Adrenal gland (tissue), 19 donors: ENCODE measurements at regions of chr19 and their contacts with region 1.

Region 1: GRCh38 chr19:49937750-49938381 is 8.6 kb upstream of the NUP62 start:
- DNase-seq: peak; percentile 82 to 89 (median 84)
- H3K4me3 ChIP-seq: peak overlapping the region in 1 of 4 donors; percentile 18
- H3K27ac ChIP-seq: peak overlapping the region; percentile 28 to 84 (median 67)
- H3K4me1 ChIP-seq: peaks cover 22 to 44% of the 10 kb centered on the region in 2 donors
- H3K27me3 ChIP-seq: no peaks in the 10 kb centered on the region
- CTCF ChIP-seq: peak; percentile 94 to 98 (median 98)
- POLR2A ChIP-seq: no peak

Region 2: DNA sequence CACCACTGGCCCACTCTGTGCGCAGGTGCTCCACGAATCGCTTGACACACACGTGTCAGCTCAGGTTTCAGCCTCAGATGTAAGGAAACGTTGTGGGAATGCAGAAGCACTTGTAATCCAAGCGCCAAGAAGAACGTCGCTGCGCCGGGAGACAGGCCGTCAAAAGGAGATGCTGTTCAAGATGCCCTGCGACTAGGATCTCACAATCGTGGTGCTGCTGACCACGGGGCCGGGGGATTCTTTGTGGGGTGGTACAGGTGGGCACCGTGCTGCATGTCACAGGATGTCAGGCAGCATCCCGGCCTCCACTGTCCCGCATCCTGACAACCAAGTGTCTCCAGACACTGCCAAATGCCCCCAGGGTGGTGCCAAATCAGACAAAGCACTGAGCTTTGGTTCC is 40.0 kb after region 1 on chr19:
- intact Hi-C with region 1: loop called in 1 of 2 experiments (anchors 2 kb)
- DNase-seq: no peak
- H3K4me3 ChIP-seq: no peak overlapping the region
- H3K27ac ChIP-seq: no peak overlapping the region
- H3K4me1 ChIP-seq: peaks cover 0 to 11% of the 10 kb centered on the region in 2 donors
- H3K27me3 ChIP-seq: no peaks in the 10 kb centered on the region
- CTCF ChIP-seq: no peak
- POLR2A ChIP-seq: no peak

Region 3: GRCh38 chr19:49983645-49984229 is 45.9 kb after region 1 on chr19:
- intact Hi-C with region 1: loop called (anchors 2 kb)
- DNase-seq: peak; percentile 68 to 89 (median 78)
- H3K4me3 ChIP-seq: no peak overlapping the region
- H3K27ac ChIP-seq: no peak overlapping the region
- H3K4me1 ChIP-seq: peaks cover 0 to 13% of the 10 kb centered on the region in 2 donors
- H3K27me3 ChIP-seq: no peaks in the 10 kb centered on the region
- CTCF ChIP-seq: peak; percentile 92 to 96 (median 94)
- POLR2A ChIP-seq: no peak